Activated CD4-positive, alpha-beta memory T cell treated with anti-CD3 and anti-CD28 coated beads for 36 hours (primary cell): ENCODE measurements at regions of chr17 and their contacts with region 1.

Region 1: DNA sequence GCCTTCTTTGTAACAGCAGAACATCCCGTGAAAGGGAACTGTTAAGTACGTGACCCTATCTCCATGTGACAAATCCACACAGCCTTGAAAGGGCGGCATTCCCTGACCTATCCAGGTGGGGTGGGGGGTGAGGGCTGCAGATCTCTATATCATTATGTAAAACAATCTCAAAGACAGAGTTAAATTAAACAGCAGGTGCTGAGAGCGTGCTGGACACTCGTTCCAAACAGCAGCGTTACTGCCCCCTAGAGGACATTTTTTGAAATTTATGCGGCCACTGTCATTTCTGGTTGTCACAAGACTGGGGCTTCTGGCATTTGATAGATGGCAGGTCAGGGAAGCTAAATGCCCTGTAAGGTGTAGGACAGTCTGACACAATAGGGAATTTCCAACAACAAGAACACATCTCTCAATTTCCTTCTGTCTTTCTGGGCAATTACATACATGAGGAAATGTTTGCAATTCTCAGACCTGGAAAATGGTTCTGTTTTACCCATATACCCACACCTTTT is 6.7 kb upstream of the SLC25A39 start:
- DNase-seq: peak; percentile 80
- H3K4me3 Mint-ChIP-seq: no peak overlapping the region
- H3K27ac Mint-ChIP-seq: peak overlapping the region; percentile 38
- H3K4me1 Mint-ChIP-seq: peaks cover 12% of the 10 kb centered on the region
- H3K27me3 Mint-ChIP-seq: no peaks in the 10 kb centered on the region

Region 2: DNA sequence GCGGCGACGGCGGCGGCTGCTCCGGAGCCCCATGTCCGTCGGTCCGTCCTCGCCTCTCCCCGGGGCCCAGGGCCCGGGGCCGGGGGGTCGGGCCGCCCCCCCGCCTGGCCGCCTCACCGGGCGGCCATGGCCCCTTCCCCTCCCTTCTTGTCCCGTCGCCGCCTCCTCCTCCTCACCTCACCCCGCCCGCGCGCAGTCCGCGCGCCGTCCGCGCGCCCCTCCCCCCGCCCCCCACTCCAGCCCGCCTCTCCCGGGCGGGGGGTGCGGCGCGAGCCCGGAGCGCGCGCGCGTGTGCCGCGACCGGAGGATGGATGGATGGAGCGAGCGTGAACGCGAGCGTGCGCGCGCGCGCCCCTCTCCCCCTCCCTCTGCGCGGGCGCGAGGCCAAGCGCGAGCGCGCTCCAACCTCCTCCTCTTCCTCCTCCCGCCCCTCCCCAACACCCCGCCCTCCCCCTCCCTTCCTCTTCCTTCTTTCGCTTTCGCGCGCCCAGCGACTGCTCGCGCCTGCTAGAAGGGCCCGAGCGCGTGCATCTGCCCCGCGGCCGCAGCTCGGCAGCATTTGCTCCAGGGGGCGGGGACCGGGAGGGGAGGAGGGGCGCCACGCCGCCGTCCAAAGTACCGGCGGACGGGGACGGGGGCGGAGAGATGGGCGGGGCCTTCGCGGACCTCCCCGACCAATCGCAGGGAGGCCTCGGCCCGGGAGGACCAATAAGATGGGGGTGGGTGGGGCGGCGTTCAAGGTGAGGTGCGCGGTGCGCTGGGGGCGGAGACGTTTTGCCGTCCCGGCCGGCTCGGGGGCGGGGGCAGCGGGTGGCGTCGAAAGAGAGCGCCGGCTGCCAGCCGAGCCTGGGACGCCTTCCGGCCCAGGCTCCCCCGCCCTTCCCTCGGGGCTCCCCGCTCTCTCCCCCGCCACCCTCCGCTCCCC is 131.5 kb before region 1 on chr17 and contains the start of gene ATXN7L3:
- CTCF ChIA-PET with region 1: interaction called, 14 read pairs
- POLR2A ChIA-PET with region 1: no interaction called
- intact Hi-C with region 1: no loop called
- DNase-seq: peak; percentile 100
- H3K4me3 Mint-ChIP-seq: peak within 1 kb of the TSS; percentile 91
- H3K27ac Mint-ChIP-seq: peak within 1 kb of the TSS; percentile 92
- H3K4me1 Mint-ChIP-seq: peaks cover 41% of the 10 kb centered on the region
- H3K27me3 Mint-ChIP-seq: no peaks in the 10 kb centered on the region
- total RNA-seq, gene ATXN7L3: 63.4 to 69.7 TPM

Region 3: DNA sequence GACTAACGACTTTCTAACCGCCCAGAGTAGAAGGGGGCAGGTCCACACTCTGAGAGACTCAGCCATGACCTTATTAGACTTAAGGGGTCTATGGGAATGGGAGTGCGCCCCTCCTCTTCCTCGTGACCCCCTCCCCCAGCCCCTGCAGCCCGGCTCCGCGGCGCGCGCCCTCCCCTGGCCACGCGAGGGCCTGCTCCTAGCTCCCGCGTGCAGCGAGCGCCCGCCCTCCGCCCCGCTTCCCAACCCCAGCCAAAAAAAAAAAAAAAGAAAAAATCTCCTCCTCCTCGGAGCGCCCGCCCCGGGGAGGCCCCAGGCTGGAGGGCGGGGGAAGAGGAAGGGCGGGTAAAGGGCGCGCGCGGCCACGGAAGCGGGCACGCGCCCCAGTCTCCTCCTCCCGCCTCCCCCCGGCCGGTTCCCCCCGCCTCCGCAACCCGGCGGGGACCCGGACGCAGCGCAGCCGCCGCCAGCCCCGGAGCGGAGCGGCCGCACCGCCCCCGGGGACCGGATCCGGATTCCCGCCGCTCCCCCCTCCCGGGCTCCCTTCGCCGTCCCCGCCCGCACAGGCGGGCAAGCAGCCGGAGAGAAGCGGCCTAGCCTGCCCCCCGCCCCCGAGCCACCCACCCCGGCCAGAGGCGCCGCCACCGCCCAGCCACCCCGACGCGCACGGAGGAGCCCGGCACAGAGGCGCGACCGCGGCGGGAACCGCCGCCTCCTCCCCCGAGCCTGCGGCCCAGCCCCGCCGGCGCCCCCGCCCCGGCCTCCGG is 112.8 kb before region 1 on chr17:
- CTCF ChIA-PET with region 1: interaction called, 13 read pairs
- POLR2A ChIA-PET with region 1: interaction called, 7 read pairs
- intact Hi-C with region 1: no loop called
- DNase-seq: peak; percentile 91
- H3K4me3 Mint-ChIP-seq: peak overlapping the region; percentile 98
- H3K27ac Mint-ChIP-seq: peak overlapping the region; percentile 94
- H3K4me1 Mint-ChIP-seq: peaks cover 40% of the 10 kb centered on the region
- H3K27me3 Mint-ChIP-seq: no peaks in the 10 kb centered on the region

Region 4: DNA sequence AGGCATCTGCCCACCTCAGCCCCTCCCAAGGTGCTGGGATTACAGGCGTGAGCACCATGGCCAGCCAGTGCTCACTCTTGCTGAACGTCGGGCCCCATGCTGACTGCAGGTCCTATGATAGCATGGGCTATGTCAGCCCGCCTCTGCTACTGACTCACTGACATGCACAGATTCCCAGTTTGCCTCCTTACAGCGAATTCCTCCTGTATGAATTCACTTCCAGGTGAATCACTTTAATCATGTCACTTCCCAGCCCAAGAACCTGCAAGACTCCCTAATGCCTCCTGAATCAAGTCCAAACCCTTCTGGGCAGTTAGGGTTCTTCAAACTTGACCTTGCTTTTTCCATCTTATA is 95.7 kb before region 1 on chr17:
- CTCF ChIA-PET with region 1: no interaction called
- POLR2A ChIA-PET with region 1: no interaction called
- intact Hi-C with region 1: no loop called
- DNase-seq: no peak
- H3K4me3 Mint-ChIP-seq: no peak overlapping the region
- H3K27ac Mint-ChIP-seq: no peak overlapping the region
- H3K4me1 Mint-ChIP-seq: peaks cover 6% of the 10 kb centered on the region
- H3K27me3 Mint-ChIP-seq: peaks cover 1% of the 10 kb centered on the region

Region 5: GRCh38 chr17:44258811-44259351 is 72.4 kb before region 1 on chr17:
- CTCF ChIA-PET with region 1: no interaction called
- POLR2A ChIA-PET with region 1: no interaction called
- intact Hi-C with region 1: no loop called
- DNase-seq: no peak
- H3K4me3 Mint-ChIP-seq: no peak overlapping the region
- H3K27ac Mint-ChIP-seq: no peak overlapping the region
- H3K4me1 Mint-ChIP-seq: no peaks in the 10 kb centered on the region
- H3K27me3 Mint-ChIP-seq: peaks cover 2% of the 10 kb centered on the region

Region 6: GRCh38 chr17:44350733-44351226 is 19.5 kb after region 1 on chr17:
- CTCF ChIA-PET with region 1: interaction called, 28 read pairs
- POLR2A ChIA-PET with region 1: no interaction called
- intact Hi-C with region 1: loop called (anchors 2 kb)
- DNase-seq: peak; percentile 81
- H3K4me3 Mint-ChIP-seq: no peak overlapping the region
- H3K27ac Mint-ChIP-seq: no peak overlapping the region
- H3K4me1 Mint-ChIP-seq: peaks cover 17% of the 10 kb centered on the region
- H3K27me3 Mint-ChIP-seq: no peaks in the 10 kb centered on the region